ENCODE measurements at regions of chr3 and their contacts with region 1.

Region 1: DNA sequence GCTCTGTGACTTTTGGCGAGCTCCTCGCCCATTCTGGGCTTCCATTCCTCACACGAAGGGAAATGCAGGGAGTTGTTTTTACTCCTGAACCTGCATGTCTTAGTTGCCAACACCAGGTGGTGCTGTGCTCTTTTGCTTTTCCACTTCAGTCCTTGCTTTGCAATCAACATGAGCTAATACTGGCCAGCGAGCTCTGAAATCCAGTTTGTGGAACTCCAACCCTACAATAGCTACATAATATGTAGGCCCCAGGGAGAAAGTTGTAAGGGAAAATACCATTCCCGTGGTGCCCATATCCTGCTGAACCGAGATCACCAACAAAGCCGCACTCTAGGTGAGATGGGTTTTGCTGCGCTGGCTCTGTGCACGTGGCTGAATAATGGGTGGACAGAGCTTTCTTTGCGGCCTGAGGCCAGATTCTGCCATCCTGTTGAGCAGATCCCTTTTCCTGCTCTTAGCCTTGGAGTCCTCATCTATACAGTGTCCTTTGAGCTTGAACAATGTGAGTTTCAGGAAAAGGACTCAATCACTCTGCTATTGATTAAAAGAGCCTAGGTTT is 25.0 kb downstream of the LSM3 start:
- H3K4me3 ChIP-seq: no peak overlapping the region
- H3K27ac ChIP-seq: no peak overlapping the region
- H3K4me1 ChIP-seq: no peaks in the 10 kb centered on the region
- CTCF ChIP-seq: peak; percentile 70

Region 2: GRCh38 chr3:14110699-14111098 is 92.9 kb before region 1 on chr3:
- CTCF ChIA-PET with region 1: no interaction called
- POLR2A ChIA-PET with region 1: no interaction called
- H3K4me3 ChIP-seq: no peak overlapping the region
- H3K27ac ChIP-seq: no peak overlapping the region
- H3K4me1 ChIP-seq: no peaks in the 10 kb centered on the region
- CTCF ChIP-seq: no peak

Region 3: GRCh38 chr3:14124615-14125190 is 78.9 kb before region 1 on chr3 and contains the starts of genes CHCHD4 and TMEM43:
- CTCF ChIA-PET with region 1: no interaction called
- POLR2A ChIA-PET with region 1: no interaction called
- H3K4me3 ChIP-seq: peak within 1 kb of the TSS; percentile 73
- H3K27ac ChIP-seq: peak within 1 kb of the TSS; percentile 73
- H3K4me1 ChIP-seq: peaks cover 4% of the 10 kb centered on the region
- CTCF ChIP-seq: no peak

Region 4: DNA sequence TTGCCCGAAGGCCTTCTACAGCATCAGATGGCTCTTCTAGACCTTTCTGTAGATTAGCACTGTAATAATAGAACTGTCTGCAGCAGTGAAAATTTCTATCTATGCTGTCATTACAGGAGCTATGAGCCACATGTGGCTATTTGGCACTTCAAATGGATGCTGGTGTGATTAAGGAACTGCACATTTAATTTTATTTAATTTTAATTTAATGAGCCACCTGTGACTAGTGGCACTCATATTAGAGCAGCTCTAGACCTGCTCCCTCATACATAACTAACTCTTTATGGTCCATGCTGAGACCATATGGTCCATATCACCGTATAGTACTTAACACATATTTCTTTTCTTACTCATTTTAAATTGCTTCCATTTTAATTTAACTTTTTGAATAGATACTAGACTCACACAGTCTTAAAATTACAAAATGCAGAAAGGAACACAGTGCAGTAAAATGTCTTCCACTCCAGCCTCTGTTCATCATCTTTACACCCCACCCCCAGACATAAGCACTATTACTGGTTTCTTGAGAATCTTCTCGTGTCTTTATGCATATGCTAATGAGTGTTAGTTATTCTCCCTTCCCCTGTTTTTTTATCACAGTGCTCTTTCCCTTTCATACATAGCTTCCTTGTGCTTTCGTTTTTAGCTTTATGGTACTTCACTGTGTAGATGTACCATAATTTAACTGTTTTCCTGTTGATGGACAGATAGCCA is 15.4 kb before region 1 on chr3:
- CTCF ChIA-PET with region 1: interaction called, 21 read pairs
- POLR2A ChIA-PET with region 1: no interaction called
- H3K4me3 ChIP-seq: no peak overlapping the region
- H3K27ac ChIP-seq: no peak overlapping the region
- H3K4me1 ChIP-seq: no peaks in the 10 kb centered on the region
- CTCF ChIP-seq: no peak

Region 5: GRCh38 chr3:14231998-14232501 is 28.4 kb after region 1 on chr3:
- CTCF ChIA-PET with region 1: interaction called, 17 read pairs
- POLR2A ChIA-PET with region 1: no interaction called
- H3K4me3 ChIP-seq: no peak overlapping the region
- H3K27ac ChIP-seq: no peak overlapping the region
- H3K4me1 ChIP-seq: no peaks in the 10 kb centered on the region
- CTCF ChIP-seq: no peak

Region 6: DNA sequence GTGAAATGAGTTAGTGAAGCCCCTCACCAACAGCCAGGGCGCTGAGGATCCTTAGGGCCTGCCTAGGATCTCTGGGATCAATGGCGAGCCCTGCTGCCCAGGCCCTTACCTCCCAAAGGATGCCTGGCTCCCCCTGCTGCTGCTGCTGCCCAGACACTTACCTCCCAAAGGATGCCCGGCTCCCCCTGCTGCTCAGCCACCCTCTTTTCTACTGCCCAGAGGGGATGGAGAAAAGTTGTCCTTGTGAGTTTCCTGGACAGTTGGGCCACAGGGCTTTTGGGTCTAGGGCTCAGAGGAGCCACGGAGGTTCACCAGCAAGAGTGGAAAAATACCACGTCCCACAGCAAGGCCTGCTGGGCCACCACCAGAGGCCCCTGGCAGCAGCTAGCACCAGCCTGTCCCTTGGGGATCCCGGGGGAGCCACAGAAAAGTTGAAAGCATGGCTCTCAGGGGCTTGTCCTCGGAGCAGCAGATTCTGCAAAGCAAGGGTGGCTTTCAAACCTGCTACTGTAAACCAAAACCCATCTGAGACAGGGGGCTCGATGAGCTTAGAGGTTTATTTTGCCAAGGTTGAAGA is 258.2 kb after region 1 on chr3:
- CTCF ChIA-PET with region 1: interaction called, 38 read pairs
- POLR2A ChIA-PET with region 1: no interaction called
- H3K4me3 ChIP-seq: no peak overlapping the region
- H3K27ac ChIP-seq: no peak overlapping the region
- H3K4me1 ChIP-seq: no peaks in the 10 kb centered on the region; the same call in 1 of the 2 replicates
- CTCF ChIP-seq: peak; percentile 98

Region 7: DNA sequence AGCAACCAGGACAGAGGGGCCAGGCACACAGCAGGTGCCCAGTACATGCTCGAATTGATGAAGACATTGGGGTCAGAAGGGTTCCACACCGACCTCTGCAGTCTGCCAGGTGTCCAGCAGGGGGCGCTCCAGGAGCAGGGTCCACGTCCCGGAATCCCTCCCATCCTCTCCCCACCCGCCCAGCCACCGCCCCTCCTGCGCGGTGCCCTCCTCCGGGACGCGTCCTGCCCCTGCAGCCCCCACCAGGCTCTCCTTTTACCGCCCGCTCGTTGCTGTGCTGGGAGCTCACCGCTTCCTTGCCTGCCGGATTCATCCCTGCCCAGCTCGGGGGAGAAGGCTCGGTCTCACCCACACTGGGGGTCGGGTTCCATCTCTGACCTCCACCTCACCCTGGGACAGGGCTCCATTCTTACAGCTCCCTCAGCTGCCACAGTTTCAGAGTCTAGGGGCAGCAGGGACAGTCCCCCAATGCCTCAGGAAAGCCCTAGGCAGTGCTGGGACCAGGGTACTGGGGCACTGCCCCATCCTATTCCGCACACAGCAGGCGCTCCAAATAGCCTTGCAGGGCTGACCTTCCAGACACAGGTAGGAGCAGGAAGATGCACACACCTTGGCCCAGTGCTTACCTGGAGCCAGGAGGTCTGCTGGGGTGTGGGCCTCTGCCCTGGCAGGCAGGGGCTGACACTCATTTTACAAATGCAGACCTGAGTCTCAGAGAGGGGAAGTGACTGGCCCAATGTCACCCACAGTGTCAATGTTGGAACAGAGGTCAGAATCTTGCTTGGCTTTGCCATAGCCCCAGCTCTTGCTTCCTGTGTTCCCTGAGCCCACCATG is 305.6 kb after region 1 on chr3:
- CTCF ChIA-PET with region 1: interaction called, 13 read pairs
- POLR2A ChIA-PET with region 1: no interaction called
- H3K4me3 ChIP-seq: no peak overlapping the region
- H3K27ac ChIP-seq: no peak overlapping the region
- H3K4me1 ChIP-seq: no peaks in the 10 kb centered on the region
- CTCF ChIP-seq: peak; percentile 79

Measured in HEK293 (cell line).